ENCODE measurements at regions of chr17 and their contacts with region 1.

Region 1: DNA sequence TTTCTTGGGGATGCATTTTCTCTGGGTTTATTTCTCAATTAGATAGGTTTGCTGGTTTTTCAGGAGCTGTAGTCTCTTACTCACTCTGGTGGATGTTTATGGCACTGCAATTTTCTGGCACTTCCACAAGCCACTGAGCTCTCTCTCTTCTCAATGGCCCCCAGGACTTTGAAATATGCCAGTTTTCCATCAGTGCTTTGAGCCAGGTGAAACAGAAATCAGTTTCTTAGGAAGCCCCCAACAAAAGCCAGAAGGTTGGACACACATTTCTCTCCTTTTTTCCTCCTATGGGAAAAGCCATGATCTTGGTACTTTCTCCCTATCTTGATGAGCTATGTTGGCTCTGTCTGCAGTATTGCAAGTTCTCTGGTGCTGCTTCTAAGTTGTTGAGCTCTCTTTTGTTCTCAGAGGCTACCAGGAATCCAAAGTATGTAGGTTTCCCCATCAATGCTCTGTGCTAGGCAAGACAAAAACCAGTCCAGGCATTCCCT is 90.7 kb upstream of the SMIM36 start:
- DNase-seq: peak; percentile 21 to 58
- H3K4me3 ChIP-seq: peak overlapping the region in 1 of 4 experiments; percentile 37; a peak in 1 of 8 replicates
- H3K27ac ChIP-seq: no peak overlapping the region
- H3K4me1 ChIP-seq: peaks cover 0 to 3% (median under 1%) of the 10 kb centered on the region in 4 experiments; a peak in 3 of 7 replicates
- H3K27me3 ChIP-seq: no peaks in the 10 kb centered on the region
- CTCF ChIP-seq: peak in 2 of 3 experiments; percentile 72 to 78; a peak in 3 of 4 replicates
- EP300 ChIP-seq: no peak
- POLR2A ChIP-seq: no peak; a peak in 1 of 3 replicates
- RAD21 ChIP-seq: peak; percentile 77 to 83

Region 2: GRCh38 chr17:55533608-55534007 is 68.3 kb before region 1 on chr17:
- CTCF ChIA-PET with region 1: interaction called, 79 read pairs
- POLR2A ChIA-PET with region 1: no interaction called
- DNase-seq: no peak
- H3K4me3 ChIP-seq: no peak overlapping the region
- H3K27ac ChIP-seq: no peak overlapping the region
- H3K4me1 ChIP-seq: no peaks in the 10 kb centered on the region
- H3K27me3 ChIP-seq: no peaks in the 10 kb centered on the region
- CTCF ChIP-seq: no peak
- EP300 ChIP-seq: no peak
- POLR2A ChIP-seq: no peak
- RAD21 ChIP-seq: no peak

Region 3: DNA sequence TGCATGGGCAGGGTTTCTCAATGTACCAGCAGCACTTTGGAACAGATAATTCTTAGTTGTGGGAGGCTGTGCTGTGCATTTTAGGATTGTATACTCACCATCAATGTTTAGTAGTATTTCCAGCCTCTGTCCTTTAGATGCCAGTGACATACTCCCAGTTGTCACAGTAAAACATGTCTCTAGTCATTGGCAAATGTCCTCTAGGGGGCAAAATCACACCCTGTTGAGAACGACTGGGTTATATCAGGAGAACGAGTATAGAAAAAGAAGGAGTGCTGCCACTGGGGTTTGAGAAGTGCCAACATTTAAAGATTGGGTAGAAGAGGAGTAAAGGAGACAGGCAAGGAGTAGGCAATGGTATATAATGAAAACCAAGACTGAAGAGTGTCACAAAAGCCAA is 52.8 kb before region 1 on chr17:
- CTCF ChIA-PET with region 1: interaction called, 16 read pairs
- POLR2A ChIA-PET with region 1: no interaction called
- DNase-seq: no peak
- H3K4me3 ChIP-seq: no peak overlapping the region
- H3K27ac ChIP-seq: no peak overlapping the region
- H3K4me1 ChIP-seq: peaks cover 0 to 6% (median 2%) of the 10 kb centered on the region in 4 experiments; a peak in 2 of 7 replicates
- H3K27me3 ChIP-seq: no peaks in the 10 kb centered on the region
- CTCF ChIP-seq: peak in 2 of 3 experiments; percentile 67 to 76; a peak in 3 of 4 replicates
- EP300 ChIP-seq: no peak
- POLR2A ChIP-seq: no peak
- RAD21 ChIP-seq: peak; percentile 66 to 80

Region 4: GRCh38 chr17:55641676-55642081 is 39.8 kb after region 1 on chr17:
- CTCF ChIA-PET with region 1: interaction called, 38 read pairs
- POLR2A ChIA-PET with region 1: interaction called, 4 read pairs
- DNase-seq: peak; percentile 33 to 52
- H3K4me3 ChIP-seq: no peak overlapping the region
- H3K27ac ChIP-seq: no peak overlapping the region
- H3K4me1 ChIP-seq: peaks cover 0 to 5% (median 0%) of the 10 kb centered on the region in 4 experiments; a peak in 1 of 7 replicates
- H3K27me3 ChIP-seq: no peaks in the 10 kb centered on the region
- CTCF ChIP-seq: peak; percentile 3 to 38 (median 22); a peak in 3 of 4 replicates
- EP300 ChIP-seq: no peak
- POLR2A ChIP-seq: no peak
- RAD21 ChIP-seq: peak; percentile 30 to 51; a peak in 3 of 4 replicates

Region 5: DNA sequence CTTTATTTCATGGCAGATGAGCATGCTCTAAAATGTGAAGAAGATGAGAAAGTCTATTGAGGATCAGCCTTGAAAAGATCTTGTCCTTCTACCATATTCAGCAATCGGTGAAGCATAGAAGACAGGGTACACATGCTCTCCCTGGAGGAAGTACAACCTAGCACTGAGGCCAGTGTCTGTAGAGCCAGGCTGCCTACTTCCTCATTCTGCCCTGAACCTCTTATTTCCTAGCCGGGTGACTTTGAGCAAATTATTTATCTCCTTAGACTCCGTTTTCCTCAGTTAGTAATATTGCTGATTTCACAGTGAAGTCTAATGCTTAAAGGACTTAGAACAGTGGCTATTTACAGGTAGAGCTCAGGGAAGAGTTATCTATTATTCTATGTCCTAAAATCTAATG is 62.4 kb after region 1 on chr17:
- CTCF ChIA-PET with region 1: no interaction called
- POLR2A ChIA-PET with region 1: no interaction called
- DNase-seq: no peak
- H3K4me3 ChIP-seq: no peak overlapping the region
- H3K27ac ChIP-seq: no peak overlapping the region
- H3K4me1 ChIP-seq: peaks cover 0 to 3% (median 0%) of the 10 kb centered on the region in 4 experiments; a peak in 1 of 7 replicates
- H3K27me3 ChIP-seq: no peaks in the 10 kb centered on the region; a peak in 1 of 7 replicates
- CTCF ChIP-seq: no peak
- EP300 ChIP-seq: no peak
- POLR2A ChIP-seq: no peak
- RAD21 ChIP-seq: no peak

Measured in H1 (cell line).